ENCODE measurements at regions of chr15 and their contacts with region 1.

Region 1: DNA sequence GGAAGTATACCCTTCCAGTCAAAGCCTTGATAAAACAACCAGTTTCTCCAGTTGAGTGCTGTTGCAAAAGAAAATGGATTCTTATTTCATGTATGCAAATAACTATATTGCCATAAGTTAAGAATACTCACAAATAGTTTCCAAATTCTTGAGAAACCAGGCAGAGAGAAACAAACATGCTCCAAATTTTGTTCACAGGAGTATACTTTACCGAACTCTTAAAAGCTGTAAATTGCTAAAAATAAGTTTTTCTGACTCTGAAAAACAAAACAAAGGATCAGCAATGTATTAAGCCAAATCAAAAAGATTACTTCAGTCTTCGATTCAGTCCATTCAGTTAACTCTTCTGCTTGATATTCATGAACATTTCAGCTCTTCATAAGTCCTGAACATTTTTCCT is 646.5 kb downstream of the MCTP2 start:
- DNase-seq: no peak
- H3K4me3 ChIP-seq: no peak overlapping the region
- H3K27ac ChIP-seq: no peak overlapping the region
- H3K4me1 ChIP-seq: no peaks in the 10 kb centered on the region
- H3K27me3 ChIP-seq: no peaks in the 10 kb centered on the region
- CTCF ChIP-seq: no peak
- EP300 ChIP-seq: no peak
- POLR2A ChIP-seq: no peak

Region 2: DNA sequence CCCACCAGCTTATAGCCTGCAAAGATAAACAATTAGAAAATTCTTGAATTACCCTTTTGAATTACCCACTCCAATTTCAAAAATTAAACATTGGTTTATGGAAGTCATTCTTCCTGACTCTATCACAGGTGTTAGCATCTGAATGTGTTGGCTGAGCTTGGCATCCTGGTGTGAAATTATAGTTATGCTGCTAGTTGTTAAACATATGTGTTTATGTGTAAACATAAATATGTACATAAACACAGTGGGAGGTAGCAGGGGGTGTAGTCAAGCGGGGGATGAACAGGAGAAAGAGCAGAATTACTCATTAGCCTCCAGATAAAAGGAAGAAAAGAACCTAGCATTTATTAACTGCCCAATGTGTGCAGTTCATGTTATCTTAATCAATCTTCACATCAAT is 116.3 kb before region 1 on chr15:
- intact Hi-C with region 1: no loop called
- DNase-seq: no peak
- H3K4me3 ChIP-seq: no peak overlapping the region
- H3K27ac ChIP-seq: no peak overlapping the region
- H3K4me1 ChIP-seq: no peaks in the 10 kb centered on the region
- H3K27me3 ChIP-seq: no peaks in the 10 kb centered on the region
- CTCF ChIP-seq: no peak
- EP300 ChIP-seq: no peak
- POLR2A ChIP-seq: no peak

Region 3: GRCh38 chr15:94815110-94815731 is 62.6 kb before region 1 on chr15:
- intact Hi-C with region 1: loop called in 1 of 4 experiments (anchors 10 kb)
- DNase-seq: no peak
- H3K4me3 ChIP-seq: no peak overlapping the region
- H3K27ac ChIP-seq: no peak overlapping the region
- H3K4me1 ChIP-seq: no peaks in the 10 kb centered on the region
- H3K27me3 ChIP-seq: no peaks in the 10 kb centered on the region
- CTCF ChIP-seq: no peak
- EP300 ChIP-seq: no peak
- POLR2A ChIP-seq: no peak

Region 4: GRCh38 chr15:95259965-95260364 is 382.1 kb after region 1 on chr15:
- intact Hi-C with region 1: no loop called
- DNase-seq: peak; percentile 53 to 69 (median 55)
- H3K4me3 ChIP-seq: no peak overlapping the region
- H3K27ac ChIP-seq: peak overlapping the region; percentile 29 to 32
- H3K4me1 ChIP-seq: peaks cover 8% of the 10 kb centered on the region
- H3K27me3 ChIP-seq: no peaks in the 10 kb centered on the region
- CTCF ChIP-seq: no peak
- EP300 ChIP-seq: no peak
- POLR2A ChIP-seq: no peak